Breast epithelium (tissue), 4 donors: ENCODE measurements at regions of chr14 and their contacts with region 1.

Region 1: GRCh38 chr14:45633220-45634004 is 380.4 kb upstream of the MIS18BP1 start:
- DNase-seq: peak in 1 of 2 donors; percentile 77
- H3K4me3 ChIP-seq: peak overlapping the region in 1 of 3 donors; percentile 23
- H3K27ac ChIP-seq: peak overlapping the region; percentile 77 to 79
- H3K4me1 ChIP-seq: no peaks in the 10 kb centered on the region
- H3K27me3 ChIP-seq: no peaks in the 10 kb centered on the region
- CTCF ChIP-seq: no peak
- POLR2A ChIP-seq: no peak

Region 2: GRCh38 chr14:45698462-45699134 is 65.2 kb after region 1 on chr14:
- intact Hi-C with region 1: no loop called
- DNase-seq: no peak
- H3K4me3 ChIP-seq: no peak overlapping the region
- H3K27ac ChIP-seq: peak overlapping the region in 1 of 2 donors; percentile 5
- H3K4me1 ChIP-seq: peaks cover 0 to 17% of the 10 kb centered on the region in 2 donors
- H3K27me3 ChIP-seq: no peaks in the 10 kb centered on the region
- CTCF ChIP-seq: no peak
- POLR2A ChIP-seq: no peak

Region 3: DNA sequence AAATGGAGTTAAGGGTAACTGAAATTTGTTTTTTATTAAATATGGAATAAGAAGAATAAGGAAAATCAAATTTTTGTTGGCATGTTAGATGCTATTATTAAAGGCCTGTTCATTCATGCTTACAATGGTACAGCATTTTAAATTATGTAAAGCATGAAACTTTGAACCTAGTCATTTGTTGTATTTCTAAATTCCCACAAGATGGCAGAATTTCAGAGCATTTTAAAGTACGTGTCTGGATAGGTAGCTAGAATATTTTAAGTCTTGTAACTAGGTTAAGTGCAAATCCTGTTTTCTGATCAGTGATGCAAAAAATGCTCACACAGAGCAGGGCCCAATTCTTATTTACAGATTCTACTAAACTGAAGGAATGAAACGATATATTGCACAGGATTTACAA is 205.2 kb after region 1 on chr14:
- intact Hi-C with region 1: no loop called
- DNase-seq: no peak
- H3K4me3 ChIP-seq: no peak overlapping the region
- H3K27ac ChIP-seq: no peak overlapping the region
- H3K4me1 ChIP-seq: no peaks in the 10 kb centered on the region
- H3K27me3 ChIP-seq: no peaks in the 10 kb centered on the region
- CTCF ChIP-seq: no peak
- POLR2A ChIP-seq: no peak

Region 4: DNA sequence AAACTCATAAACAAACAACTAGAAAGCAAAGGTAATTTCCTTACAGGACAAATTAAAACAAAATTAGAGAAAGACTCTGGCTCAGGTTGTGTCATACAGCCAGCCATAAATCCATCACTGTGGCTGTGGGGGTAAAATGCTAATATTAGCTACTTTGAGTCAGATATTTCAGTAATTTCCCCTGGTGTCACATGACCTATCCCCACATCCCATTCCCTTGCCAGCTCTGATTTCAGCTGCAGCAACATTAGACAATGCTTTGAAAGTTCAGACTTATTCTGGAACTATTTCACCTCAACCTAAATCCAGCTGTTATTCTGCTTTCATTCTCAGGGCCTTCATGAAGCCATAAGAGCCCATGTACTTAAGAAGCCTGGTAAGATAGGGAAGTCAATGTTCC is 962.8 kb after region 1 on chr14:
- intact Hi-C with region 1: loop called (anchors 5 kb)
- DNase-seq: no peak
- H3K4me3 ChIP-seq: no peak overlapping the region
- H3K27ac ChIP-seq: no peak overlapping the region
- H3K4me1 ChIP-seq: no peaks in the 10 kb centered on the region
- H3K27me3 ChIP-seq: no peaks in the 10 kb centered on the region
- CTCF ChIP-seq: no peak
- POLR2A ChIP-seq: no peak